SK-N-SH (cell line): ENCODE measurements at regions of chr1 and their contacts with region 1.

Region 1: DNA sequence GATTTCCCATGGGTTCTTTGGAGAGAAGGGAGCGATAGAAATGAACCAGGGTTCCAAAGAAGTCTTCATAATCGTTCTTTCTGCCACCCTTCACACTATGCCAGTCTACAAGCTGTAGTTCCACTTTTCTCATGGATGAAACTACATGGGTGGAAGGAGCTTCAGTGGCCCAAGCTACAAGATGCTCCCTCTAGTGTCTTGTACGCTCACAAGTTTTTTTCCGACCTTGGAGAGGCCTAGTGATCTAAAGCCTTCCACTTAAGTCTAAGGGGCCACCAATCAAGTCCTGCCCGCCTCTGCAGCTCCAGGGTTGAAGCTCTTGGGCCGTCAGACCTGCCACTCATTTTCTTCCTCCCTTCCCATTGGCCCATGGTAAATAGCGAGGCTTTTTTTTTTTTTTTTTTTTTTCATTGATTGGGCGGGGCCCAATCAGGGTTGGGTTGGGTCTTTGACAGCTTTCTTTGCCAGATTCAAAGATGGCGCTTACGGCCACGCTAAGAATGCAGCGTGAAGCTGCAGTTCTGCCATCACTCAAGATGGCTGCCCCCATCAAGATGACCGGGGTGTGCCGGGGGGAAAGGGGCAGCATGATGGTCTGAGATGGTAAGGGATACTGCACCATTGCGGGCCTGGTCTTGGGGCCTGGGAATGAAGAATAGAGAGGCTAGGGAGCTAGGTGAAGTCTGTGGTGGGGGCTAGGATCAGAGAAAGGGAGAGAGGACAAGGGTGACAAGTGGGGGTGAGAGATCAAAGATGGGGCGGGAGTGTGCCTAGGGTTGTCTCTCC is at the start of gene TOMM40L:
- DNase-seq: peak; percentile 88
- H3K4me3 ChIP-seq: peak within 1 kb of the TSS; percentile 69 to 74
- H3K27ac ChIP-seq: peak within 1 kb of the TSS in 1 of 2 experiments; percentile 67; a peak in 3 of 4 replicates
- H3K4me1 ChIP-seq: peaks cover 8 to 21% of the 10 kb centered on the region in 2 experiments; a peak in 3 of 4 replicates
- H3K27me3 ChIP-seq: no peaks in the 10 kb centered on the region
- CTCF ChIP-seq: peak; percentile 70
- EP300 ChIP-seq: no peak
- RAD21 ChIP-seq: peak; percentile 50
- polyA plus RNA-seq, gene TOMM40L: 9.7 and 11.9 TPM in 2 replicates

Region 2: DNA sequence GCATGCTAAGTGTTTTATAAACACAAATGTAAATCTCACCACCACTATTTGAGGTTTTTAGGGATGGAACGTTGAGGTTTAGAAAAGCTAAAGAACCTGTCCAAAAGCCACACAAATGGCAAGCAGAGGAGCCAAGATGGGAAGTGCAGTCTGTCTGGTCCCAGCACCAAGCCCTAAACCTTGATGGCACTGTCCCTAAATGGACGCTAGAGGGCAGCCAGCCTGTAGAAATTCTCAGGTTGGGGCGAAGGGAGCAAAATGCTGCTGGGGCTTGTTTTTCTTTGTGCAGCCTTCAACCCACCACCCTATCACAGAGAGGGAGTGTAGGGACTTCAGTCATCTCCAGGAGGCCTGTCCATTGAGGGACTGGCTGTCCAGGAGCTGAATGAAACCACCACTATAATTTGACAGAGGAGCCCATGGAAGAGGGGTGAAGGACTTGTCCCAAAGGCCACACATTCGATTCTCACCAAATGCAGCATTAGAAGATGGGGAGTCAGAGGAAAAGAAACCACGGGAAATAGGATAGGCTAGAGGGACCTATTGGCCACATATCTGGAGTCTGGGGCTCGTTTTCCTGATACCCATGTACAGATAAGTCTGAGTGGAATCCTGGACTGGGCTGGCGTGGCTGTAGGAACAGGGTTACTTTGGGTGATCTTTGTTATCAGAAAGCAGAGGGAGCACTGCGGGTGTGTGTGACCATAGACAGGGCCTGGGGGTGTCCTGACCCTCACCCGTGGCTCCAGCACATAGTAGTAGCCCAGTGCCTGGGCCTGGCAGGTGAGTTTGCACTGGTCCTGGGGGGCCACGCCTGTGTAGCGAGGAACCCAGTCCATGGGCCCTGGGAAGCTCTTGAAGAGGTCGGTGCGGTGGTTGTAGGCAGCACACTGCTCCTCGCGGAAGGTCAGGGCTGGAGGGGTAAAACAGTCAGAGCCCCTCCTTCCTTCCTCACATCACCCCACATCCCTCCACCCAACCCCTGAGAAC is 33.0 kb before region 1 on chr1:
- CTCF ChIA-PET with region 1: interaction called, 39 read pairs
- POLR2A ChIA-PET with region 1: interaction called, 7 read pairs
- DNase-seq: peak; percentile 89
- H3K4me3 ChIP-seq: no peak overlapping the region
- H3K27ac ChIP-seq: peak overlapping the region in 1 of 2 experiments; percentile 48; a peak in 2 of 4 replicates
- H3K4me1 ChIP-seq: peaks cover 11 to 35% of the 10 kb centered on the region in 2 experiments; a peak in 3 of 4 replicates
- H3K27me3 ChIP-seq: no peaks in the 10 kb centered on the region
- CTCF ChIP-seq: peak; percentile 86
- EP300 ChIP-seq: no peak
- RAD21 ChIP-seq: peak; percentile 85

Region 3: GRCh38 chr1:161209790-161210409 is 15.8 kb before region 1 on chr1:
- CTCF ChIA-PET with region 1: interaction called, 40 read pairs
- POLR2A ChIA-PET with region 1: no interaction called
- DNase-seq: peak; percentile 84
- H3K4me3 ChIP-seq: no peak overlapping the region; a peak in 1 of 4 replicates
- H3K27ac ChIP-seq: no peak overlapping the region
- H3K4me1 ChIP-seq: no peaks in the 10 kb centered on the region
- H3K27me3 ChIP-seq: no peaks in the 10 kb centered on the region
- CTCF ChIP-seq: peak; percentile 95
- EP300 ChIP-seq: no peak
- RAD21 ChIP-seq: peak; percentile 77

Region 4: GRCh38 chr1:161250829-161251228 is 25.1 kb after region 1 on chr1:
- CTCF ChIA-PET with region 1: interaction called, 19 read pairs
- POLR2A ChIA-PET with region 1: no interaction called
- DNase-seq: no peak
- H3K4me3 ChIP-seq: no peak overlapping the region
- H3K27ac ChIP-seq: no peak overlapping the region
- H3K4me1 ChIP-seq: no peaks in the 10 kb centered on the region
- H3K27me3 ChIP-seq: peaks cover 9% of the 10 kb centered on the region; the same call in 1 of the 2 replicates
- CTCF ChIP-seq: no peak
- EP300 ChIP-seq: no peak
- RAD21 ChIP-seq: no peak

Region 5: DNA sequence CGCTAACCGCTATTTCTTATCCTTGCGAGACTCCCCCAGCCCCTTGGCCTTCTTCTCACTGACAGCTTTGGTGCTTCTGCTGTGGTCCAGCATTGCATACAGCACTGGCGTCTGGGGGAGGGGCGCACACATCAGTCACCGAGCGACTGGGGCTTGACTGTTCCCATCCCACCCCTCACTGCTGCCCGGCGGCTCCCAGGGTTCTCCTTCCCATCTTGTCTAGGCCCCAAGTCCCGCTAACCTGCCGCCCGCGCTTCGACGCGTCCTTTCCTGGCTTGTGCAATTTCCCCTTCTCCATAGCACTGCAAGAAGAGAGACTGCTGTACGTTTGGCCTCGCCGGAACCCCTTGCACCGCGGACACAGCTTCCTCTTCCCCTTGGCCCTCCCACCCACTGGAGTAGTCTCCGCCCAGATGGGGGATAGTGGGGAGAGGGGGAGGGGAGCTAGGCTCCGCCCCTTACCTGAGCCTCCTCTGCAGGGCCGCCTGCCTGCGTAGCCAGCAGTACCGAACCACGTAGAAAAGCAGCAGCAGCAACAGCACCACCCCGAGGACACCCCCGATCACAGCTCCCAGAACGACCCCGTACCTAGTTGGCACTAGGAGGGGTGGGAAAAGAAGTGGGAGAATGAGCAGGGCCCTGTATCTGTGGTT is 80.3 kb after region 1 on chr1:
- CTCF ChIA-PET with region 1: interaction called, 16 read pairs
- POLR2A ChIA-PET with region 1: no interaction called
- DNase-seq: peak; percentile 91
- H3K4me3 ChIP-seq: peak overlapping the region; percentile 71 to 79
- H3K27ac ChIP-seq: 0 out of 4 replicates have a peak overlapping the region, but pooled peaks of 1 of the 2 experiments have one; percentile 8
- H3K4me1 ChIP-seq: peaks cover 0 to 11% of the 10 kb centered on the region in 2 experiments; a peak in 2 of 4 replicates
- H3K27me3 ChIP-seq: no peaks in the 10 kb centered on the region
- CTCF ChIP-seq: peak; percentile 29
- EP300 ChIP-seq: no peak
- RAD21 ChIP-seq: peak; percentile 32

Region 6: DNA sequence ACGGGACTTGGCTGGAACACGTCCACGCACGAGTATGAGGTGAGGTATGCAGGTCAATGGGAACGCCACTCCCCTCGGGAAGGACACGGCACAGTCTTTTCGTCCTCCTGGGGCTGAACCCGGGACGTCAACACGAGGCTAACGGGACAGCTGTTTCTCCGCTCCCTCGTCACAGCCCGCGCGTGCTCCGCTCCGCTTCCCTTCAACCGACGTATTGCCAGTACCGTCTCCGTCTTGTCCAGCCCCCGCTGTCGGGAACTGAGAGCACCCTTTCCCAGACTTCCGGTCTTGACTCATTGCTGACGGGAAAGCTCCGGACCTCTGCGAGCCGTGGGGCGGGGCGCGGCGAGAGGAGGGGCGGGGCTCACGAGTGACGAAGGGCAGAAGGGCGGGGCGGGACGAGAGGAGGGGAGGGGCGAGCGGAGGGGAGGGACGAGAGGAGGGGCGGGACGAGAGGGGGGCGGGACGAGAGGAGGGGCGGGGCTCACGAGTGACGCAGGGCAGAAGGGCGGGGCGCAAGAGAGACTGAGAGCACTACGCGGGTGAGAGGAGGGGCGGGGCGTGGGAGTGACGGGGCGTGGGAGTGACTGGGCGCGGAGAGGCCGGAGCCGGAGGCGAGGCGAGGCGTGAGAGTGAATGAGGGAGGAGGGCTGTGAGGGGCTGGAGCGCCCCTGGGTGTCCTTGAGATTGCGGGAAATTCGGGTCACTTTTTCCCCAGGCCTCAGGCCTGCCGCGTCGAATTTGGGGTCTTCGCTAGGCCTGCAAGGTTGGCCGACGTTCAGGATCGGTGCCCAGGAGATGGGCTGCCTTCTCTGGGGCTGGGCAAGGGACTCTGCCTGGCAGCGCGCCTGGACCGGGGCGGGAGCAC is 164.2 kb after region 1 on chr1:
- CTCF ChIA-PET with region 1: interaction called, 78 read pairs
- POLR2A ChIA-PET with region 1: interaction called, 5 read pairs
- DNase-seq: peak; percentile 94
- H3K4me3 ChIP-seq: peak overlapping the region; percentile 66 to 79
- H3K27ac ChIP-seq: peak overlapping the region; percentile 79 to 96
- H3K4me1 ChIP-seq: peaks cover 0 to 5% of the 10 kb centered on the region in 2 experiments; a peak in 2 of 4 replicates
- H3K27me3 ChIP-seq: no peaks in the 10 kb centered on the region
- CTCF ChIP-seq: no peak
- EP300 ChIP-seq: 0 out of 4 replicates have a peak, but pooled peaks of 1 of the 2 experiments have one; percentile 15
- RAD21 ChIP-seq: no peak